Common myeloid progenitor, CD34-positive (primary cell): ENCODE measurements at regions of chr16 and their contacts with region 1.

Region 1: GRCh38 chr16:66728117-66728787 is 23.2 kb downstream of the DYNC1LI2 start:
- DNase-seq: peak; percentile 64 to 80 (median 80)
- H3K4me3 ChIP-seq: no peak overlapping the region
- H3K27ac ChIP-seq: no peak overlapping the region
- H3K4me1 ChIP-seq: peaks cover 3 to 11% (median 10%) of the 10 kb centered on the region in 4 experiments
- H3K27me3 ChIP-seq: no peaks in the 10 kb centered on the region

Region 2: GRCh38 chr16:66608241-66609138 is 119.8 kb before region 1 on chr16:
- CTCF ChIA-PET with region 1: interaction called, 12 read pairs
- POLR2A ChIA-PET with region 1: no interaction called
- DNase-seq: peak; percentile 87 to 91 (median 91)
- H3K4me3 ChIP-seq: no peak overlapping the region
- H3K27ac ChIP-seq: peak overlapping the region in 1 of 2 experiments; percentile 59
- H3K4me1 ChIP-seq: peaks cover 0 to 44% (median 38%) of the 10 kb centered on the region in 4 experiments
- H3K27me3 ChIP-seq: no peaks in the 10 kb centered on the region

Region 3: DNA sequence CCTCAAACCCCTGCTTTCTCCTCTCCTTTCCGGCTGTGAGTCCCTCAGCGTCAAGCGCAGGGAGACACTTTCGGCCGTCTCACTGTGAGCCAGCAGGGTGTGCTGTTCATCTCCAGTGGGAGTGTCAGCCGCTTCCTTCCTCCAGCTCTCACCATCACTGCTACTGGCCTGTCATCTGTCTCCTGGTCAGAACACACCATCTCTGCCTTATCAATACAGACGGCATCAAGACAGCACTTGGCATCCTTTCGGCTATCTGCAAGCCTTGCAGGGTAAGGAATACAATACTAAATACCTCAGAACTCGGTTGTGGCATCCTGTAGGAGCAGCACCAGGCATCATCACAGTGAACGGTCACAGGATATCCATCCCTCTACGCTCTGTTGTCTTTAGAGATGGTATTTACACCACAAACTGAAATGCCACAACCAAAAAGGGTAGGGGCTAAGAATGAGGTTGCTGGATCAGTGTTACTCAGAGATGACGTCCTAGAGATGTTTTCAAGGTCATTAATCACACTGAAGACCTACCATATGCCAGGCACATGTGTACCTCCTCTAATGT is 11.1 kb before region 1 on chr16:
- CTCF ChIA-PET with region 1: interaction called, 20 read pairs
- POLR2A ChIA-PET with region 1: interaction called, 3 read pairs
- DNase-seq: peak in 2 of 3 donors; percentile 25 to 32
- H3K4me3 ChIP-seq: no peak overlapping the region
- H3K27ac ChIP-seq: no peak overlapping the region
- H3K4me1 ChIP-seq: no peaks in the 10 kb centered on the region
- H3K27me3 ChIP-seq: no peaks in the 10 kb centered on the region

Region 4: DNA sequence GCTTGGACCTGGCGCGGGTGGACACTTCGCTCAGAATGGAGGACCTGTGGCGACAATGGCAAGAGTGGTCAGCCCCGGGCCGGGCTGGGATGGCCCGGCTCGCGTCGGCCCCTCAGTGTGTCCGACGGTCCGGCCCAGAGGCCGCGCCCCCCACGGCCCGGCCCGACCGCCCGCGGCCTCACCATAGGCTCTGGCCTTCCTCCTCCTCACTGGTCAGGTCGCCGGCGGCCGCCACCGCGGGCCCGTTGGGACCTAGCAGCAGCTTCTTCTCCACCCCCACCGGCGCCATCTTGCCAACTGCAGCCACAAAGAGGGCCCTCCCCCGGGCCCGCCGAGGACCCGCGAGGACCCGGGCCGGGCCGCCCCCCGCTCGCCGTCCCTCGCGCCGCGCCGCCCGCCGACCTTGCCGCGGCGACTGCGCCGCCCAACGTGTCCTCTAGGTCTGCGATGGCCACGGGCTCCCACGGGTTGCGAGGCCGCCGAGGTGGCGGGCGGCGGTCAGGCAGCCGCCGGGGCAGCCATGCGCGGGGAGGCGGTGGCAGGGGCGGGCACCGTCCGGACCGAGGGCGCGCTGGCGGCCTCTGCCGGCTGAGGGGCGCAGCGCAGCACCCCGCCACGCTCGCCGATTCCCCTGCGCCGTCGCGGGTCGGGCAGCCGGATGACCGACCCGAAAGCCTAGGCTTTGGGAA is 23.2 kb after region 1 on chr16 and contains the start of gene DYNC1LI2:
- CTCF ChIA-PET with region 1: interaction called, 16 read pairs
- POLR2A ChIA-PET with region 1: interaction called, 3 read pairs
- DNase-seq: peak; percentile 76 to 83 (median 78)
- H3K4me3 ChIP-seq: peak within 1 kb of the TSS; percentile 74 to 99 (median 94)
- H3K27ac ChIP-seq: peak within 1 kb of the TSS; percentile 78 to 90
- H3K4me1 ChIP-seq: peaks cover 16 to 32% (median 27%) of the 10 kb centered on the region in 4 experiments
- H3K27me3 ChIP-seq: peaks cover 0 to 18% (median 10%) of the 10 kb centered on the region in 5 experiments